GM18951 (cell line): ENCODE measurements at regions of chr2 and their contacts with region 1.

Region 1: DNA sequence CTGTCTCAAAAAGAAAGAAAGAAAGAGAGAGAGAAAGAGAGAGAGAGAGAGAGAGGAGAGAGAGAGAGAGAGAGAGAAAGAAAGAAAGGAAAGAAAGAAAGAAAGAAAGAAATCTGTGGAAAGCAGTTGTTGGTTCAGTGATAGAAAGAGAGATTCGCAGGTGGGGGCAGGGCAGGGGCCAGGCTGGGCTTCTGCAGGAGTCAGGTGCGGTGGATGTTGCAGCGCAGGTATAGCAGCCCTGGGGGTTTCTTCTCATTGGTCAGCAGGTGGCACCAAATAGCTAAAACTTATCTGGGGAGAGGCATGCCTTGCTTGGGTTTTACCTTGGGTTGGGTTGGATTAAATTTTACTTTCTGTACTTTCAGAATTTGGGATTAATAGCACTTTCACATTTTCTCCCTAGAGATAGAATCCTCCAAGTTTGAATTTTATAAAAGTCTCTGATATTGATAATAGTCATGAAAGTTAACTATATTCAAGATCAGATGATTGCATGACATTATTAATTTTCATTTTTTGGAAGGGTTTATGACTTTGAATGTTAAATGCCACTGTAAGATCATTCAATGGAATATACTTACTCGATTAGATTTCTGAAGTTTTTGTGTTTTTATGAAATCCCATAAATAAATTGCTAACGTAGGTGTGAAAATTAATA is 66.6 kb downstream of the SPTBN1 start:
- POLR2A ChIP-seq: no peak

Region 2: DNA sequence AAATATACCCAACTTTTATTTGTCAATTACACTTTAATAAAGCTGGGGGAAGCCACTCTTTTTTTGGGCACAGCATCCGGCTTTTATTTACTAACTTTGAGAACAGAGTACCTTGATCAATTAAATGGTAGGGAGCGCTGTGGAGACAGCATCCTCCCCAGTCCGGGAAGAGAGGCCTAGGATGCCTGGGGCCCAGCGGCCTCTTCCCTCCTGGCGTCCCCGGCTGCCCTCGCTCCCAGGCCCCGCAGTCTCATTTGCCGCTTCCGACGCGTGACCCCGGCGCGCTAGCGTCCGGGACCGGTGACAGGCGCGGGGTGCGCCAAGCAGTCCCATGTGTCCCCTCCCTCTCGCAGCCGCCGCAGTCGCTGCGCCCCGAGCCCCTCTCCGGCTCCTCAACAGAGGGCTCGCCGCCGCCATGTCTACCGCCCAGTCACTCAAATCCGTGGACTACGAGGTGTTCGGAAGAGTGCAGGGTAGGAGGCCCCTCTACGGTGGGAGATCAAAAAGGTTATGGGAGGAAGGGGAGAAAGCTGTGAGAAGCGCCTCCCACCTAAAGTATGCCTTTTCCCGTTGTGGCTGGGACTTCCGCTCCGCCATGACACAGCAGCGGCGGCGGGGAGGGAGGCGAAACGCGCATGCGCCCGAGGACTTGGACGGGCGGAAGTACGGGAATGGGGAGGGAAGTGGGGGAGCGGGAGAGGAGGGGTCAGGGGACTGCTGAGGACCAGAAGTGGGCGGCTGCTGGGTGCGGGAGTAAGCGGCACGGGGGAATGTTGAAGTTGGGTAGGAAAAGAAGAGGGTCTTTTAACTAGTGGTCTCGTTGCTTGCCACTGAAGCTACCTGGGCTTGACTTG is 407.2 kb before region 1 on chr2 and contains the start of gene ACYP2:
- in situ Hi-C with region 1: loop called (anchors 25 kb)
- POLR2A ChIP-seq: peak; percentile 87

Region 3: GRCh38 chr2:54579684-54580620 is 57.2 kb after region 1 on chr2:
- in situ Hi-C with region 1: loop called (anchors 5 kb)
- POLR2A ChIP-seq: peak; percentile 26

Region 4: GRCh38 chr2:54634564-54635511 is 112.1 kb after region 1 on chr2:
- in situ Hi-C with region 1: loop called (anchors 5 kb)
- POLR2A ChIP-seq: peak; percentile 40